ENCODE measurements at regions of chr5 and their contacts with region 1.

Region 1: DNA sequence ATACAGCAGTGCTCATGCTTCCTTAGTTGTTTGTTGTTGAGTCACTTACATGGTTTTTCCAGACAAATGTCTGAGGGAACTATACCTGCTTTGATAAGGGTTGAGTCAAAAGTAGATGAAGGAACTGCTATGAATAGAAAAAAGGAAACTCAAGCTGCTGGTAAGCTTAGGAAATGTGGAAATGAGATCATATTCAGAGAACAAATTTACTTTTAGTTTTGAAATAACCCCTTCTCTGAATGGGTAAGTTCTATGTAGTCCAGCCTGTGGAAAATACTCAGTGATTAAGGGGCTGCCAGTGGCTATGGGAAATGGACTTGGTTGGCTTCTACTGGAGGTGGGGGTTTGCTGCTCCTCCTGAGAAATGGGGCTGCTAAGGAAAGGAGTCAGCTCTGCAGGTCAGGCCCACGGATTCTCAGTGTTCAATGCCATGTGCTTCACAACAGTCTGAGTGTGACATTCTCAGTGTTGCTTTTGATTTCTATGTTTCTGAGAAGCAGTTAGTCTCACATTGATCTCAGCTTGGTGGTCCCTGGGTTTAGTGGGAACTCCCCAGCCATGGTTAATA is 47.7 kb upstream of the GLRX start:
- DNase-seq: peak; percentile 80
- H3K4me3 Mint-ChIP-seq: peak overlapping the region; percentile 60
- H3K27ac Mint-ChIP-seq: peak overlapping the region; percentile 92
- H3K4me1 Mint-ChIP-seq: peaks cover 41% of the 10 kb centered on the region
- H3K27me3 Mint-ChIP-seq: no peaks in the 10 kb centered on the region

Region 2: DNA sequence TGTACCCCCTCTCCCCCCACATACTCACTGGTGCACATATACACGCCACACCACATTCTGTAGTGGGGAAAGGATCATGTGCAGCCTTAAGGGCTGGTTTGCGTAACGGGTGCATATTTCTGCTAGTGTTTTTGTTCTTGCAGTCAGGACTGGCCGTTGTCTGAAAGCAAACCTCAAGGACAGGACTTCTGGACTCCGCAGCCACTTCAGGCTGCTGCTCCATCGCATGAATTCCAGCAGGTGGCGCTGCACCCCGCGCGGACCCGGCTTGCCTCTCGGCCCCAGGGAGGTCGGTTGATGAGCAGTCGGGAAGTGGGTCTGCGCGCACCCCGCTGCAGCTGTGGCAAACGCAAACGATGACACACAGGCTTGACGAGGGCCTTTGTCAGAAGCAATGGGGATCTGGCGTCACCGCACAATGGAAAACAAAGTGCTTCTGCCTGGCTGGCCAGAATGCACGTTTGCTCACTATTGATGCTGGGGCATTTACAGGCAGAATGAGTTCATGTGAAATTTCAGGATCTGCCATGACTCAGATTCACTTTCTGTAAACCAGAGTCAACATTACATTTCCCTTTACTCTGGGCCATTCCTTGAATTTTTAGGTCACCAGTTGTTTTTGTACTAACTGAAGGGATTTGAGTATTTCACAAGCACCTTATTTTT is 11.4 kb before region 1 on chr5:
- intact Hi-C with region 1: loop called (anchors 1 kb)
- DNase-seq: peak; percentile 96
- H3K4me3 Mint-ChIP-seq: peak overlapping the region; percentile 66
- H3K27ac Mint-ChIP-seq: peak overlapping the region; percentile 78
- H3K4me1 Mint-ChIP-seq: peaks cover 52% of the 10 kb centered on the region
- H3K27me3 Mint-ChIP-seq: no peaks in the 10 kb centered on the region

Region 3: DNA sequence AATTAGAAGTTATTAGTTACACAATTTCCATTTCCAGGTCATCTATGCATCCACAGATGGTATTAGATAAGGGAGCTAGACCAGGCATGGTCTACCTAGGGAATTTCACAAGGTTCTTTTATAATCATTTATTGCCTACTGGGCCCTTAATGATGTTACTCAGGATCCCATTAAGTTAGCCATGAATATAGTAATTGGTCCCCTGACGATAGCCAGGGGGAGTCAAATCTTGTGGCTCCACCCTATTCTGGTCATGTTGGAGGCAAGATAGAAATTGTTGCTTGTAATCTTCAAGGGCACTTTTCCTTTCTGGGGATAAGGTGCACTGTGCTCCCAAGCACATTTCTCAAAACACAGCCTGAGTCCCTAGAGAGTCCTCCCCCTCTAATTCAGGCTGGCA is 105.5 kb after region 1 on chr5:
- intact Hi-C with region 1: no loop called
- DNase-seq: no peak
- H3K4me3 Mint-ChIP-seq: no peak overlapping the region
- H3K27ac Mint-ChIP-seq: no peak overlapping the region
- H3K4me1 Mint-ChIP-seq: peaks cover 6% of the 10 kb centered on the region
- H3K27me3 Mint-ChIP-seq: peaks cover 7% of the 10 kb centered on the region

Region 4: GRCh38 chr5:96067894-96068614 is 197.9 kb after region 1 on chr5:
- intact Hi-C with region 1: loop called (anchors 2 kb)
- DNase-seq: peak; percentile 65
- H3K4me3 Mint-ChIP-seq: peak overlapping the region; percentile 40
- H3K27ac Mint-ChIP-seq: peak overlapping the region; percentile 90
- H3K4me1 Mint-ChIP-seq: peaks cover 59% of the 10 kb centered on the region
- H3K27me3 Mint-ChIP-seq: no peaks in the 10 kb centered on the region

Region 5: GRCh38 chr5:96113170-96113939 is 243.2 kb after region 1 on chr5:
- intact Hi-C with region 1: loop called (anchors 5 kb)
- DNase-seq: peak; percentile 59
- H3K4me3 Mint-ChIP-seq: no peak overlapping the region
- H3K27ac Mint-ChIP-seq: peak overlapping the region; percentile 76
- H3K4me1 Mint-ChIP-seq: peaks cover 11% of the 10 kb centered on the region
- H3K27me3 Mint-ChIP-seq: no peaks in the 10 kb centered on the region

Region 6: GRCh38 chr5:96279801-96280542 is 409.8 kb after region 1 on chr5:
- intact Hi-C with region 1: loop called (anchors 2 kb)
- DNase-seq: no peak
- H3K4me3 Mint-ChIP-seq: peak overlapping the region; percentile 53
- H3K27ac Mint-ChIP-seq: peak overlapping the region; percentile 77
- H3K4me1 Mint-ChIP-seq: peaks cover 22% of the 10 kb centered on the region
- H3K27me3 Mint-ChIP-seq: peaks cover 6% of the 10 kb centered on the region

Region 7: GRCh38 chr5:96662725-96663513 is 792.7 kb after region 1 on chr5:
- intact Hi-C with region 1: loop called (anchors 5 kb)
- DNase-seq: peak; percentile 96
- H3K4me3 Mint-ChIP-seq: peak overlapping the region; percentile 99
- H3K27ac Mint-ChIP-seq: peak overlapping the region; percentile 99
- H3K4me1 Mint-ChIP-seq: peaks cover 49% of the 10 kb centered on the region
- H3K27me3 Mint-ChIP-seq: peaks cover 12% of the 10 kb centered on the region

Measured in activated CD4-positive, alpha-beta T cell treated with anti-CD3 and anti-CD28 coated beads, Interleukin-2, amount 10 ng/mL, durations not matched to agents 24 days and 14 days (primary cell).